ENCODE measurements at regions of chr7 and their contacts with region 1.

Region 1: GRCh38 chr7:143490717-143491306 is 13.1 kb downstream of the TAS2R41 start:
- DNase-seq: peak; percentile 36
- H3K4me3 Mint-ChIP-seq: no peak overlapping the region
- H3K27ac Mint-ChIP-seq: no peak overlapping the region
- H3K4me1 Mint-ChIP-seq: peaks cover 30% of the 10 kb centered on the region
- H3K27me3 Mint-ChIP-seq: no peaks in the 10 kb centered on the region

Region 2: DNA sequence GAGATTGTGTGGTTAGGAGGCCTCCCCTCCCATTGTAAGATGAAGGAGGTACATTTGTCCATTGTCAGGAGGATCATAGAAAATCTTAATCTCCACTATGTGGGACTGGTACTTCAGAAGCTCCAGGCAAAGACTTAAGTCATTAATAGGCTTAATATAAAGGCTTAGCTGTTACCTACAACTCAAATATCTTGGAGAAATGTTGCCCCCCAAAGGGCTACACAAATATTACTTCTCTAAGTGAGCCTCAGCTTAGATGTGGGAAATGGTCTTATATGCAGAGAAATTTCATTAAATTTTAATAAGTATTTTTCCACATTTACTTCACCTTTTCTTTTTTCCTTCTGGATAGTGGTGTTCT is 14.1 kb after region 1 on chr7:
- CTCF ChIA-PET with region 1: interaction called, 4 read pairs
- intact Hi-C with region 1: loop called (anchors 2 kb)
- DNase-seq: no peak
- H3K4me3 Mint-ChIP-seq: no peak overlapping the region
- H3K27ac Mint-ChIP-seq: no peak overlapping the region
- H3K4me1 Mint-ChIP-seq: peaks cover 19% of the 10 kb centered on the region
- H3K27me3 Mint-ChIP-seq: no peaks in the 10 kb centered on the region